ENCODE measurements at regions of chr11 and their contacts with region 1.

Region 1: DNA sequence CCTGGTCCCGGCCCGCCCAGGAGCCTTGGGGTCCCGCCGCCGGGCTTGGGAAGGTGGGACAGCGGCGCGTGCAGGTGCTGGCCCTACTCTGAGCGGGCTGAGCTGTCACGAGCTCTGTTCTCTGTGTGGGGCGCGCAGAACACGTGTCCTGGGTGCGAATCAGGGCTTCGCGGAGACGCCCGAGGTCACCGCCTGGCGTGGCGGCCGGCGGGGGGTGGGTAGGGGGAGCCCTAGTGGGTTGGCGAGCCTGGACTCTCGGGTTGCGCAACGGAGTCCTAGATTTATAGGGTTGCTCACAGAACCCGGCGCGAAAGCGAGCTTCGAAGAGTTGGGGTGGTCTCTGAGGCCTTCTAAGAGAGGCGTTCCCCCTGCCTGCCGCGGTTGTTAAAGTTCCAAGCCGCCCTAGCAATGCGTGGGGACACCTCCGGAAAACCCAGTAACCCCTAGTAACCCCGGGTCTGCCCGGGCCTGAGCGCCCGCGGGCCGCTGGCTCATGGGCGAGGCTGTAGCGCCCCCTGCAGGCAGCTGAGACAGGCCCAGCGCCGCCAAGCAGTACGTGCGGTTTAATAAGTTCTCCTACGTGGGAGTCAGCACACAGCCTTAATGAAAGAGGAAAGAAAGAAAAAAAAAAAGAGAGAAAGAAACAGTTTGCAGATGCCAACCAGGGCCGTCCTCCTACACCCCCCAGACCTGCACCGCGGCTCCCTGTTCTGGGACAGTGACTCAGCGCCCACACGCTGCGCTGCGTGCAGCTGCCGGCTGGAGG is 2.8 kb downstream of the ADM start:
- DNase-seq: peak; percentile 95
- H3K4me3 Mint-ChIP-seq: peak overlapping the region; percentile 93
- H3K27ac Mint-ChIP-seq: peak overlapping the region; percentile 86
- H3K4me1 Mint-ChIP-seq: peaks cover 55% of the 10 kb centered on the region
- H3K27me3 Mint-ChIP-seq: peaks cover 46% of the 10 kb centered on the region

Region 2: GRCh38 chr11:9534791-9535781 is 772.5 kb before region 1 on chr11:
- intact Hi-C with region 1: loop called (anchors 10 kb)
- DNase-seq: peak; percentile 93
- H3K4me3 Mint-ChIP-seq: no peak overlapping the region
- H3K27ac Mint-ChIP-seq: no peak overlapping the region
- H3K4me1 Mint-ChIP-seq: no peaks in the 10 kb centered on the region
- H3K27me3 Mint-ChIP-seq: no peaks in the 10 kb centered on the region

Region 3: GRCh38 chr11:9757809-9758636 is 549.6 kb before region 1 on chr11:
- intact Hi-C with region 1: loop called (anchors 1 kb)
- DNase-seq: peak; percentile 98
- H3K4me3 Mint-ChIP-seq: peak overlapping the region; percentile 83
- H3K27ac Mint-ChIP-seq: peak overlapping the region; percentile 89
- H3K4me1 Mint-ChIP-seq: peaks cover 56% of the 10 kb centered on the region
- H3K27me3 Mint-ChIP-seq: peaks cover 2% of the 10 kb centered on the region

Region 4: GRCh38 chr11:9972989-9973388 is 334.6 kb before region 1 on chr11:
- intact Hi-C with region 1: loop called (anchors 1 kb)
- DNase-seq: peak; percentile 80
- H3K4me3 Mint-ChIP-seq: no peak overlapping the region
- H3K27ac Mint-ChIP-seq: no peak overlapping the region
- H3K4me1 Mint-ChIP-seq: peaks cover 4% of the 10 kb centered on the region
- H3K27me3 Mint-ChIP-seq: no peaks in the 10 kb centered on the region

Region 5: DNA sequence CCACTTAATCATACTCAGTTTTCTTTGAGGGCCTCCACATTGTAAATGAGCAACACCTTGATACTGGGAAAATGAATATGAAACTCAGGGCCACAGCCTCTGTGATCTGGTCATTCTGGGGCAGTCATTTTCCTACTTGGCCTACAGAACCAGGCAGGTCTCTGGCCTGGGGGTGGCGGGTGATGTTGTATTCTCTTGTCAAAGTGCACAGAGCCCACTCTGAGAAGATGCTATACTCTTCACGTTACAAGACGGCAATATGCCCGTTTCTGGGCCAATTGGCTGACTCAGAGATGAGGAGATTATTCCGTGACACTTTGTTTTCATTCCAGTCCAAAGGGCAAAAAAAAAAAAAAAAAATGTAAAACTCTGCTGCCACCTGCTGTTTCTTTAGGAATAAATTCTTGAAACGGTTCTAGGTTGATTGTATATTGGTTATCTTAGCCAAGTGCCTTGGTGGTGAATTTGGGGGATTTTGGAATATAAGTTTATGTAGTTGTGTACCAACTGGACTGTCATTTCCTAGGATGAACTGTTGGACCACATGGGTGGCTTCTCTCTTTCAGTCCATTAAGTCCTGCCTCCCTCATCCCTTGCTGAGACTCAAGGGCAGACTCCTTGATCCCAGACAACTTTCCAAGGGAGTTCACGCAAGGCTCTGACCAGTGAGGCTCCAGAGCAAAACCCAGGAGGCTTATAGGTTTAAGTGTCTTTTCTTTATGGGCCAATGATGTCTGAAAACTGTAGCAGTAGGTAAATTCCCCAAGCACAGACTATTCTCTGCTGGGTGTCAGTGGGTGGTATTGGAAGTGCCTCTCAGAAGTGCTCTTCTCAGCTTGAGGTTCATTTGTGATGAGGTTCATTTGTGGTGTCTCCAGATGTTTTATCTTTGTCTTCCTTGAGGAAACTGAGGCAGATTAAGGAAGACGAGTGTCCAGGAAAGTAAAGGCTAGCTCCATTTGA is 15.5 kb after region 1 on chr11:
- intact Hi-C with region 1: loop called (anchors 1 kb)
- DNase-seq: peak; percentile 85
- H3K4me3 Mint-ChIP-seq: peak overlapping the region; percentile 62
- H3K27ac Mint-ChIP-seq: peak overlapping the region; percentile 94
- H3K4me1 Mint-ChIP-seq: peaks cover 21% of the 10 kb centered on the region
- H3K27me3 Mint-ChIP-seq: peaks cover 13% of the 10 kb centered on the region

Region 6: GRCh38 chr11:10750838-10751580 is 443.4 kb after region 1 on chr11 and contains the start of gene CTR9:
- intact Hi-C with region 1: loop called (anchors 5 kb)
- DNase-seq: peak; percentile 98
- H3K4me3 Mint-ChIP-seq: peak within 1 kb of the TSS; percentile 95
- H3K27ac Mint-ChIP-seq: peak within 1 kb of the TSS; percentile 89
- H3K4me1 Mint-ChIP-seq: peaks cover 32% of the 10 kb centered on the region
- H3K27me3 Mint-ChIP-seq: no peaks in the 10 kb centered on the region
- total RNA-seq, gene CTR9: 43.9 and 44.3 TPM in 2 replicates

Measured in activated CD4-positive, alpha-beta T cell treated with anti-CD3 and anti-CD28 coated beads, Interleukin-2, amount 10 ng/mL, durations not matched to agents 24 days and 14 days (primary cell).